Sigmoid colon (tissue), 7 donors: ENCODE measurements at regions of chr16 and their contacts with region 1.

Region 1: GRCh38 chr16:88383401-88384221 is 852 bp downstream of the ZNF469 start:
- DNase-seq: peak; percentile 71
- H3K4me3 ChIP-seq: peak overlapping the region in 3 of 4 donors; percentile 36 to 59 (median 51)
- H3K27ac ChIP-seq: peak overlapping the region in 1 of 4 donors; percentile 35
- H3K4me1 ChIP-seq: peaks cover 0 to 29% (median 26%) of the 10 kb centered on the region in 4 donors
- H3K27me3 ChIP-seq: peaks cover 3 to 27% (median 12%) of the 10 kb centered on the region in 3 donors
- CTCF ChIP-seq: peak in 3 of 4 experiments; percentile 38 to 65 (median 60)
- EP300 ChIP-seq: no peak
- POLR2A ChIP-seq: no peak

Region 2: DNA sequence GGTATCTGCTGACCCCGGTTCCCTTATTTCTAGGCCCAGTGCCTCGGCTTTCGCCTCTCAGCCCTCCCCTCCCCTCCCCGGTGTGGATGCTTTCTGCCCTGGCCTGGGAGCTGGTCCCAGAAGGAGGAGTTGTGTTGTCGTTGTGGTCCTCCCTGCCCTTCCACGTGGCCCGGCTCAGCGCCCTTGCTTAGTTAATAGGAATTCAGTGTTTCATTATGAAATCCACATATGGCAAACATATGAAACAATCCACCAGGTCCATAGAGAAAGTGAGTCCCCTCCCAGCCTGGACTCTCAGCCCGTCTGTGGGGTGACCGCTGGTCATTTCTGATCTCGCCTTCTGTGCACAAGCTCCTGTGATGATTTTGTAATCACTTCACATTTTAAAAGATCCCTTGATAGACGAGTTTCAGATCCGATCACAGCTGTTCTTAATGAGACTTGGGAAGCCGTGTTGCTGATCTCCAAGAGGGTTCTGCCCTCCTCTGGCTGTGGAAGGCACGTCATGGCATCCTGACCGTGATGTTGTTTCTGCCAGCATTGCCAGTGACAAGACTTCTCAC is 320.3 kb before region 1 on chr16:
- intact Hi-C with region 1: no loop called
- DNase-seq: peak; percentile 81
- H3K4me3 ChIP-seq: no peak overlapping the region
- H3K27ac ChIP-seq: peak overlapping the region; percentile 8 to 77 (median 53)
- H3K4me1 ChIP-seq: peaks cover 0 to 23% (median 22%) of the 10 kb centered on the region in 4 donors
- H3K27me3 ChIP-seq: no peaks in the 10 kb centered on the region
- CTCF ChIP-seq: no peak
- EP300 ChIP-seq: no peak
- POLR2A ChIP-seq: no peak

Region 3: DNA sequence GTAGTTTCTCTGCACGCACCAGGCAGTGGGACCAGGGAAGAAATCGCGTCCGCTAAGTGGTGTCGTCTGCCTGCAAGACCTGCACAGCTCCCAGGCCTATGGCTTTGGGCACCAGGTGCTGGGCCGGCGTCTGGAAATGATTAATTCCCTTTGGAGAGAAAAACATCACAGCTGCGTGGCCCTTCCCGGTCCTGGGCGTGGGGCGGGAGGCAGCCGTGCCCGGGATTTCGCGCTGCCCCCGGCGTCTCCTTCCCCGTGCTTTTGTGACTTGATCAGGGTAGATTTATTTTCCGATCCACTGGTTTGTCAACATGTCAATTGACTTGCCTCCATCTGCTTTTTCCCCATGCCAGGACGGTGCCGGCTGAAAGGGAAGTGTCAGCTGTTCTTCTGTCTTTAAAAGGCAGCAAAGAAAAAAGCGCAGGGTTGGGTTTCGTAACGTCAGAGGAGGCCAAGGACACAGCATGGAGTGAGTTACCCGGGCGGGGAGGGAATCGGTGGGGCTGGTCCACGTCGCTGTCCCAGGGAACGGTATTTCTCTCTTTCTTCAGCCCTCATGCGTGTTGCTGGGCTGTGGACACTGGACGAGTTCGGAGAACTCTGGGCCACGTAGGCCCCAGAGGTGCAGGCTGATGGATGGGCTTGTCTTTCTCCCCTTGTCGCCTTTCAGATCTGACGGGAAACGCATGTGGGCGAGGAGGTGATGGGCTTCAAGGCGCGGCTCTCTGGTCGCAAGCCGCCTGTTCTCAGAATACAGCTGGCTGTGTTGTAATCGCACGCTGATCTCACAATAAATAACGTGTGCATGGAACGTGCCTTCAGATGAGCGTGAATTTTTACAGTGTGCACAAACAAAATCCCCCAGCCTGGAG is 189.0 kb before region 1 on chr16:
- intact Hi-C with region 1: loop called (anchors 5 kb)
- DNase-seq: peak; percentile 84
- H3K4me3 ChIP-seq: no peak overlapping the region
- H3K27ac ChIP-seq: no peak overlapping the region
- H3K4me1 ChIP-seq: no peaks in the 10 kb centered on the region
- H3K27me3 ChIP-seq: no peaks in the 10 kb centered on the region
- CTCF ChIP-seq: no peak
- EP300 ChIP-seq: no peak
- POLR2A ChIP-seq: no peak

Region 4: GRCh38 chr16:88479793-88480760 is 96.5 kb after region 1 on chr16:
- intact Hi-C with region 1: no loop called
- DNase-seq: no peak
- H3K4me3 ChIP-seq: no peak overlapping the region
- H3K27ac ChIP-seq: no peak overlapping the region
- H3K4me1 ChIP-seq: no peaks in the 10 kb centered on the region
- H3K27me3 ChIP-seq: peaks cover 0 to 45% (median 20%) of the 10 kb centered on the region in 3 donors
- CTCF ChIP-seq: no peak
- EP300 ChIP-seq: no peak
- POLR2A ChIP-seq: no peak